ENCODE measurements at regions of chrX and their contacts with region 1.

Region 1: DNA sequence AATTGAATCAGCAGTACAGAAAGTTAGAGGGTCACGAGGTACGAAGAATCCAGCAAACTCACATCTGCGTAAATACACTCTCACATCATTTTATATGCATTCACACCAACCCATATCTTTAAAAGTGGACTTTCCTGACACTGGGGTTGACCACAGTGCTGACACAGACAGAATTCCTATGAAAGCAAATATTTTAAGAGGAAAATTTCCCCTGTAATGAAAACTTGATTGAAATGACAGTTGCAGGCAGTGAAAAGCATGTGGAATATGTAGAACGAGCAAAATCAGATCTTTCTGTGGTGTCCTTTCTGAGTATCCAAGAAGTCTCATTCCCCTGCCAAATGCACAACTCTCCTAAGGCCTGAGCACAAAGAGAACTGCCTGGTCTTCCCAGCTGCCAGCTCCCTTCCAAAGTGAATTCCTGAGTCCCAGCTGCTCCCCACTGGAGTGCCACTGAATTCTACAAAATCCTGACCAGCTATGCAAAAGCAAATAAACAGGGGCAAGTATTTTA is 50.5 kb upstream of the FAM9C start:
- DNase-seq: no peak
- ATAC-seq: no peak
- H3K4me3 ChIP-seq: no peak overlapping the region
- H3K4me3 Mint-ChIP-seq: peak overlapping the region; percentile 67
- H3K27ac ChIP-seq: peak overlapping the region; percentile 44 to 85
- H3K27ac Mint-ChIP-seq: peak overlapping the region; percentile 95
- H3K4me1 ChIP-seq: peaks cover 51% of the 10 kb centered on the region
- H3K4me1 Mint-ChIP-seq: peaks cover 90% of the 10 kb centered on the region
- H3K27me3 ChIP-seq: no peaks in the 10 kb centered on the region
- H3K27me3 Mint-ChIP-seq: no peaks in the 10 kb centered on the region
- CTCF ChIP-seq: no peak

Region 2: GRCh38 chrX:13144927-13145655 is 50.2 kb after region 1 on chrX:
- CTCF ChIA-PET with region 1: no interaction called
- POLR2A ChIA-PET with region 1: interaction called, 3 read pairs
- intact Hi-C with region 1: loop called (anchors 5 kb)
- DNase-seq: no peak
- ATAC-seq: no peak
- H3K4me3 ChIP-seq: no peak overlapping the region
- H3K4me3 Mint-ChIP-seq: no peak overlapping the region
- H3K27ac ChIP-seq: no peak overlapping the region
- H3K27ac Mint-ChIP-seq: no peak overlapping the region
- H3K4me1 ChIP-seq: peaks cover 3% of the 10 kb centered on the region
- H3K4me1 Mint-ChIP-seq: peaks cover 8% of the 10 kb centered on the region
- H3K27me3 ChIP-seq: no peaks in the 10 kb centered on the region
- H3K27me3 Mint-ChIP-seq: no peaks in the 10 kb centered on the region
- CTCF ChIP-seq: no peak